RWPE1 (cell line): ENCODE measurements at regions of chr3 and their contacts with region 1.

Region 1: GRCh38 chr3:75886971-75887526 is 101.7 kb upstream of the ZNF717 start:
- DNase-seq: peak; percentile 2
- H3K27ac ChIP-seq: no peak overlapping the region
- CTCF ChIP-seq: no peak

Region 2: GRCh38 chr3:75906555-75907112 is 19.6 kb after region 1 on chr3:
- CTCF ChIA-PET with region 1: no interaction called
- POLR2A ChIA-PET with region 1: interaction called, 11 read pairs
- DNase-seq: no peak
- H3K27ac ChIP-seq: no peak overlapping the region
- CTCF ChIP-seq: no peak

Region 3: GRCh38 chr3:75983609-75984290 is 96.7 kb after region 1 on chr3:
- CTCF ChIA-PET with region 1: no interaction called
- POLR2A ChIA-PET with region 1: no interaction called
- DNase-seq: no peak
- H3K27ac ChIP-seq: no peak overlapping the region
- CTCF ChIP-seq: no peak

Region 4: GRCh38 chr3:76028774-76029173 is 141.7 kb after region 1 on chr3:
- CTCF ChIA-PET with region 1: no interaction called
- POLR2A ChIA-PET with region 1: no interaction called
- DNase-seq: no peak
- H3K27ac ChIP-seq: no peak overlapping the region
- CTCF ChIP-seq: no peak